ENCODE measurements at regions of chr11 and their contacts with region 1.

Region 1: DNA sequence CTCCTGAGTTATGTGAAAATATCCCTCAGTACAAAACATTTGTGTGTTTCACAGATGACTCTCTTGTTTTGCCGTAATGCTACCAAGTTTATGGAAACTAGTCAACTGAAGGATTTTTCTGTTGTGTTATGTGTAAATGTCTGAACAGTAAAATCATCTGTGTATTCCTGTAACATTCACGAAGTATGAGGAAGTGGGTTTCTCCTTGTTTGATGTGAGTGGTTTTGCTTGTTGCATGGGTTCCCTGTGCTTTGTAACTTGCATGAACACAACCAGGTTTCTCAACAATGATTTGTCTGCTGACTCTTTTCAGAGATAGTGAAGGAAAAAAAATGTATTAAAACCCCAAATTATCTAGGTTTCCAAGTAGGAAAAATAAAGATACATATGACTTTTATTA is 138.1 kb downstream of the PGR start:
- DNase-seq: no peak
- ATAC-seq: no peak

Region 2: GRCh38 chr11:101323997-101324396 is 332.5 kb after region 1 on chr11:
- intact Hi-C with region 1: loop called (anchors 10 kb)
- DNase-seq: peak; percentile 30
- ATAC-seq: peak; percentile 31

Region 3: GRCh38 chr11:101436511-101437142 is 445.1 kb after region 1 on chr11:
- intact Hi-C with region 1: loop called (anchors 5 kb)
- DNase-seq: no peak
- ATAC-seq: peak; percentile 64